ENCODE measurements at regions of chr3 and their contacts with region 1.

Region 1: DNA sequence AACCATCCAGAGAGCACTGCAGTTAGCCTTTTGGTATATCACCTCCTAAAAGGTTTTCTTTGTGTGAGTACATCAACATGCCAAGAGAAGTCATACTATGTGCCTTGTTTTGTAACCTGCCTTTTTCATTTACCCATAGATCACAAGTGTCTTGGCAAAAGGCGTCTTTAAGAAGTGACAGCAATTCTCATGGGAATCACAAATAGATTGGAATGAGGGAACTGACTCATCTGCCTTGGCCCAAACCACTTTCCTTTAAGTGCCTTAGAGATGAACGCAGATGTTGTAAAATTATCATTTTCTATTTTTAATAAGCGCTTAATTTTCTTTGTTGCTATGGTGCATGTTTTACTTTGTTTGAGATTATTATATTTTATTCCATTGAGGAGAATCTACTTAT is 20.7 kb upstream of the POMGNT2 start:
- DNase-seq: no peak
- H3K4me3 ChIP-seq: no peak overlapping the region
- CTCF ChIP-seq: no peak

Region 2: DNA sequence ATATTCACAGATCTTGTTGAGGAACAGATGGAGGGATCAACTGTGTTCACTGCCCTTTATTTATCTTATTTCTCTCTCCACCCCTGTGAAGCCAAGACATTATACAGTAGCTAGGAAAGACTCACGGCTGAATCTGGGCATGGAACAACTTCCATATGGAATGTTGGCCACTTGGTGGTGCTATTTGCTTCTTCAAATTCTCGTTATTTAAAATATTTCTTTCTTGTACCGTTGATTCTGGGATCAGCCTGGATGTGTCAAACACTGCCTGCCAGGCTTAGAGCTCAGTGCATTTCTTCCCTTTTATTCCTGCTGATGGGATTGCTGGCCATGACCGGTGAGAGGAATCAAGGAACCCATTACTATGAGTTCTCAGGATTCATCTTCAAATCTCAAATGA is 164.9 kb before region 1 on chr3:
- in situ Hi-C with region 1: loop called (anchors 10 kb)
- DNase-seq: peak; percentile 37
- H3K4me3 ChIP-seq: no peak overlapping the region
- CTCF ChIP-seq: peak; percentile 57

Region 3: GRCh38 chr3:43031485-43031884 is 95.1 kb before region 1 on chr3:
- in situ Hi-C with region 1: loop called (anchors 5 kb)
- DNase-seq: no peak
- H3K4me3 ChIP-seq: no peak overlapping the region
- CTCF ChIP-seq: no peak

Region 4: DNA sequence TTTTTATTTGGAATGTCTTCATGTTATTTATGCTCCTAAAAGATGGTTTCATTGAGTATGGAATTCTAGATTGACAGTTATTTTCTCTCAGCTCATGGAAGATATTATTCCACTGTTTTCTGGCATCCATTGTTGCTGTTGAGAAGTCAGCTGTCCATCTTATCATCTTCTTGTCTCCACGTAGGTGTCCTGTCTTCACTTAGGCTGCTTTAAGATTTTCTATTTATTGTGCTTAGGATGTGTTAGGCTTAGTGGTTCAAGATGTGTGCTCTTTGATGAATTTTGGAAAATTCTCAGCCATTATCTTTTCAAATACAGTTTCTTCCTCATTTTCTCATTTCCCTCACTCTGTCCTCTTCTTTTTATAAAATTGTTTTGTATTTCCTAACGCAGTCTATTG is 211.8 kb after region 1 on chr3:
- in situ Hi-C with region 1: no loop called
- DNase-seq: no peak
- H3K4me3 ChIP-seq: no peak overlapping the region
- CTCF ChIP-seq: no peak